GM12878 (cell line): ENCODE measurements at regions of chr14 and their contacts with region 1.

Region 1: DNA sequence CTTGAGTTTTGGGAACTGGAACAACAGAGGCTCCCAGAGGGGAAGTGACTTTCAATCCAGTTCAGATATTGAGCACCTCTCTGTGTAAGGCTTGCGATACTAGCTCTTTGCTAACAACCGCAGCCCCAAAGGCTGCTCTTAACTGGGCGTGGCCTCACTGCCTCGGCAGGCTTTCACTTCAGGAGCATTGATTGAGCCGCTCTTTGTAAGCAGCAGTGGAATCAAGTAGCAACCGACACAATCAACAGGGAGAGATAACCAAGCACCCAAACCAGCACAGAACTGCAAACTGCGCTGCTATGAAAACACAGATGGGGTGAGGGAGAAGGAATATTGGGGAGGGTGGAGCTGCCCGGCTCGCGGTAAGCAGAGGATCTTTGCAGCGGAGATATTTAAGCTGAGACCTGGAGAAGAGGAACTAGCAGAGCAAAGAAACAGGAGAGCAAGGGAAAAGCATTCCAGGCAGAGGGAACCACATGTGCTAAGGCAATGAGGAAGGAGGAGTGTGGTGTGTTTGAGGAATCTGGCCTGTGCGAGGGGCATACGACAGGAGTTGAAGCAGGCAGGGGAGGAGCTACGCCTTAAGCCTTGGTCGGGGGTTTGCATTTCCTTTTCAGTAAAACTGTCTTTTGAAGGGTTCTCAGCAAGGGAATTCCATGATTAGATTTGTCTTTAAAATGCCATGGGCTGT is 17.3 kb upstream of the YY1 start:
- DNase-seq: no peak
- ATAC-seq: peak; percentile 98
- H3K4me3 ChIP-seq: peak overlapping the region; percentile 79
- H3K27ac ChIP-seq: peak overlapping the region; percentile 93
- H3K4me1 ChIP-seq: peaks cover 25% of the 10 kb centered on the region
- H3K27me3 ChIP-seq: no peaks in the 10 kb centered on the region
- CTCF ChIP-seq: no peak
- EP300 ChIP-seq: no peak
- POLR2A ChIP-seq: peak; percentile 78
- RAD21 ChIP-seq: no peak

Region 2: DNA sequence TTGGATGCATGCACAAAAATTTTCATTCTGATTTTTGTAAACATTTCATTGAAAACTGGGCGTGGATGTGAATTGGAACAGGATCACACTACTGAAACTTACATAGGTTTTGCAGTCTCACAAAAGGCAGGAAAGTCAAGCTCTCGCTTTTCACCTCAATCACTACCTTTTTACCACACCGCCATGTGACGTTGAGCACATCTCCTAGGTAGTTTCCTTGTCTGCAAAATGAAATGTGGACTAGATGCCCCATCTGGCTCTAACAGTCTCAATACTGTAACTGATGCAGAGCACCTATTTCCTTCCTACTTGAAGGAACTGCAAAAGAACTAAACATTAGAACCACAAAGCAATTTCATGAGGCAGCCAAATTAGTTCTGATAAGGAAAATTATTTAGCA is 12.8 kb after region 1 on chr14:
- CTCF ChIA-PET with region 1: interaction called, 39 read pairs
- POLR2A ChIA-PET with region 1: interaction called, 37 read pairs
- RAD21 ChIA-PET with region 1: interaction called, 20 read pairs
- SMC1A ChIA-PET with region 1: interaction called, 83 read pairs
- in situ Hi-C with region 1: no loop called
- intact Hi-C with region 1: no loop called
- DNase-seq: no peak
- ATAC-seq: no peak
- H3K4me3 ChIP-seq: no peak overlapping the region; the same call in 1 of the 2 replicates
- H3K27ac ChIP-seq: no peak overlapping the region
- H3K4me1 ChIP-seq: no peaks in the 10 kb centered on the region
- H3K27me3 ChIP-seq: no peaks in the 10 kb centered on the region
- CTCF ChIP-seq: no peak
- EP300 ChIP-seq: no peak
- POLR2A ChIP-seq: no peak
- RAD21 ChIP-seq: no peak

Region 3: DNA sequence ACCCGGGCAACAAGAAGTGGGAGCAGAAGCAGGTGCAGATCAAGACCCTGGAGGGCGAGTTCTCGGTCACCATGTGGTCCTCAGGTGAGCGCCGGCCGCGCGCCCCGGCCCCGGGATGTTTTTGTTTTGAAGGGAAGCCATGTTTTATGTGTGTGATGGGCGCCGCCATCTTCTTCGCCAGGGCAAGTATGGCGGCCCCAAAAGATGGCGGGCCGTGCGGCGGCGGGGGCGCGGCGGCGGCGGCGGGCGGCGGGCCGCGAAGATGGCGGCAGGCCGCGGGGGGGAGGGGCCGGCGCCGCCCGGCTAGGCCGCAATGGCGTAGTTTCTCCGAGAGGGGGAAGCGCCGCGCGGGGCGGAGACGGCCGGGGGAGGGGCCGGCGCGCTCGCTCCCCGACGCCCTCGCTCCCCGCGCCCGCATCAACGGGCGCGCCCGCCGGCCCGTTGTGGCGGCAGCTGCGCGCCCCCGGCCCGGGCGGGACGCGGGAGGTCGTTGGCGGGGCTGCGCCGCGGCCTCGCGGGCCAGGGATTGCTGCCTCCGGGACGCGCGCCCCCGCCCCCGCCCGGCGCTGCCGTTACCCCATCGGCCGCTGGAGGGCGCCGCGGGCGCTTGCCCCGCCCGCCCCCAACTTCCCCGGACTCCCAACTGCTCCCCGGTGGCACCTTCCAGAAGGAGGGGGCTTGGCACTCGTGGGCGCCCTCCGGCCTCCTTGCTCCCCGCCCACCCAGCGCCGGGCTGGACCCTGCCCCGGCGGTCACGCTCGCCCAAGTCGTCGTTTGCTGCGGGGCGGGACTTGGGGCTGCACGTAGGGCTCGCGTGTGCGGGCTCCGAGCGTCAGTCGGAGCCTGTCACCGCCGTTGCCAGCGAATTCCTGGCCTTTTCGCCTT is 18.4 kb after region 1 on chr14:
- CTCF ChIA-PET with region 1: interaction called, 39 read pairs
- POLR2A ChIA-PET with region 1: interaction called, 37 read pairs
- RAD21 ChIA-PET with region 1: interaction called, 20 read pairs
- SMC1A ChIA-PET with region 1: interaction called, 83 read pairs
- in situ Hi-C with region 1: no loop called
- intact Hi-C with region 1: no loop called
- DNase-seq: no peak
- ATAC-seq: peak; percentile 52
- H3K4me3 ChIP-seq: peak overlapping the region; percentile 95
- H3K27ac ChIP-seq: peak overlapping the region; percentile 74
- H3K4me1 ChIP-seq: no peaks in the 10 kb centered on the region
- H3K27me3 ChIP-seq: no peaks in the 10 kb centered on the region
- CTCF ChIP-seq: peak; percentile 58 to 71 (median 71); a peak in 5 of 6 replicates
- EP300 ChIP-seq: no peak
- POLR2A ChIP-seq: peak; percentile 60; the same call in 1 of the 2 replicates
- RAD21 ChIP-seq: peak; percentile 29; the same call in 1 of the 2 replicates

Region 4: GRCh38 chr14:100246826-100247428 is 25.2 kb after region 1 on chr14:
- CTCF ChIA-PET with region 1: interaction called, 11 read pairs
- POLR2A ChIA-PET with region 1: interaction called, 9 read pairs
- RAD21 ChIA-PET with region 1: interaction called, 4 read pairs
- SMC1A ChIA-PET with region 1: interaction called, 6 read pairs
- in situ Hi-C with region 1: no loop called
- intact Hi-C with region 1: no loop called
- DNase-seq: no peak
- ATAC-seq: peak; percentile 43
- H3K4me3 ChIP-seq: no peak overlapping the region
- H3K27ac ChIP-seq: no peak overlapping the region
- H3K4me1 ChIP-seq: peaks cover 3% of the 10 kb centered on the region
- H3K27me3 ChIP-seq: no peaks in the 10 kb centered on the region
- CTCF ChIP-seq: peak; percentile 48 to 58 (median 55)
- EP300 ChIP-seq: no peak
- POLR2A ChIP-seq: no peak
- RAD21 ChIP-seq: peak; percentile 47; the same call in 1 of the 2 replicates

Region 5: DNA sequence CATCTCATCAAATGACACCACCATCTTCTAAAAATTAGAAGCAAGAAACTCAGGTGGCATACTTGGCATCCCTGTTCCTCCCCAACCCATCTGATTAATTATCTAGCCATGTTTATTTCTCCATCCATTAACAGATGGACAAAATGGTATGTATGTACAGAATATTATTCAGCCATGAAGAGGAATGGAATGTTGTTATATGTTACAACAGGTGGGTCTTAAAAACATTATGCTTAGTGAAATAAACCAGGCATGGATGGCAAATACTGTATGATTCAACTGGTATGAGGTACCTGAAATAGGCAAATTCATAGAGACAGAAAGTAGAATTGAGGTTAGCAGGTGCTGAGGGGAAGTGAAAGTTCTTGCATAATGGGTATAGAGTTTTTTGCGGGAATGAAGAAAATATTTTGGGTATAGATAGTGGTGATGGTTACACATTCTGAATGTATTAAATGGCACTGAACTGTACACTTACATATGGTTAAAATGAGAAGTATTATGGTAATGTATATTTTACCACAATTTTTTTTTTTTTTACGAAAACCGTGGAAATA is 34.7 kb after region 1 on chr14:
- CTCF ChIA-PET with region 1: interaction called, 3 read pairs
- POLR2A ChIA-PET with region 1: no interaction called
- RAD21 ChIA-PET with region 1: no interaction called
- SMC1A ChIA-PET with region 1: interaction called, 3 read pairs
- in situ Hi-C with region 1: no loop called
- intact Hi-C with region 1: loop called (anchors 1 kb)
- DNase-seq: no peak
- ATAC-seq: peak; percentile 86
- H3K4me3 ChIP-seq: peak overlapping the region; percentile 37; the same call in 1 of the 2 replicates
- H3K27ac ChIP-seq: no peak overlapping the region; the same call in 1 of the 2 replicates
- H3K4me1 ChIP-seq: peaks cover 52% of the 10 kb centered on the region
- H3K27me3 ChIP-seq: no peaks in the 10 kb centered on the region
- CTCF ChIP-seq: no peak
- EP300 ChIP-seq: peak in 1 of 2 experiments; percentile 51; a peak in 1 of 4 replicates
- POLR2A ChIP-seq: no peak
- RAD21 ChIP-seq: no peak